ENCODE measurements at regions of chr1 and their contacts with region 1.

Region 1: GRCh38 chr1:111127923-111128643 is 11.8 kb downstream of the DRAM2 start:
- DNase-seq: peak; percentile 88
- ATAC-seq: peak; percentile 88
- H3K4me3 ChIP-seq: peak overlapping the region in 3 of 5 experiments; percentile 26 to 58 (median 31)
- H3K4me3 Mint-ChIP-seq: peak overlapping the region; percentile 36
- H3K27ac ChIP-seq: peak overlapping the region; percentile 95 to 98
- H3K27ac Mint-ChIP-seq: peak overlapping the region; percentile 72
- H3K4me1 ChIP-seq: peaks cover 79 to 93% of the 10 kb centered on the region in 2 donors
- H3K4me1 Mint-ChIP-seq: peaks cover 83% of the 10 kb centered on the region
- H3K27me3 ChIP-seq: no peaks in the 10 kb centered on the region
- H3K27me3 Mint-ChIP-seq: no peaks in the 10 kb centered on the region
- CTCF ChIP-seq: no peak

Region 2: GRCh38 chr1:109906160-109906838 is 1221.8 kb before region 1 on chr1:
- CTCF ChIA-PET with region 1: no interaction called
- POLR2A ChIA-PET with region 1: no interaction called
- intact Hi-C with region 1: loop called (anchors 5 kb)
- DNase-seq: peak; percentile 84
- ATAC-seq: peak; percentile 89
- H3K4me3 ChIP-seq: peak overlapping the region in 2 of 5 experiments; percentile 17 to 19
- H3K4me3 Mint-ChIP-seq: peak overlapping the region; percentile 74
- H3K27ac ChIP-seq: no peak overlapping the region
- H3K27ac Mint-ChIP-seq: peak overlapping the region; percentile 88
- H3K4me1 ChIP-seq: peaks cover 27 to 34% of the 10 kb centered on the region in 2 donors
- H3K4me1 Mint-ChIP-seq: peaks cover 45% of the 10 kb centered on the region
- H3K27me3 ChIP-seq: peaks cover 0 to 69% (median 42%) of the 10 kb centered on the region in 4 experiments
- H3K27me3 Mint-ChIP-seq: peaks cover 60% of the 10 kb centered on the region
- CTCF ChIP-seq: no peak

Region 3: GRCh38 chr1:110872745-110873720 is 255.1 kb before region 1 on chr1 and contains the start of gene CD53:
- CTCF ChIA-PET with region 1: no interaction called
- POLR2A ChIA-PET with region 1: no interaction called
- intact Hi-C with region 1: loop called (anchors 5 kb)
- DNase-seq: peak; percentile 92
- ATAC-seq: peak; percentile 66
- H3K4me3 ChIP-seq: peak within 1 kb of the TSS; percentile 73 to 100 (median 97)
- H3K4me3 Mint-ChIP-seq: peak within 1 kb of the TSS; percentile 99
- H3K27ac ChIP-seq: peak within 1 kb of the TSS; percentile 96 to 99
- H3K27ac Mint-ChIP-seq: peak within 1 kb of the TSS; percentile 99
- H3K4me1 ChIP-seq: peaks cover 60% of the 10 kb centered on the region in 2 donors
- H3K4me1 Mint-ChIP-seq: peaks cover 70% of the 10 kb centered on the region
- H3K27me3 ChIP-seq: no peaks in the 10 kb centered on the region
- H3K27me3 Mint-ChIP-seq: no peaks in the 10 kb centered on the region
- CTCF ChIP-seq: no peak
- total RNA-seq, gene CD53: 490 and 495 TPM in 2 replicates

Region 4: DNA sequence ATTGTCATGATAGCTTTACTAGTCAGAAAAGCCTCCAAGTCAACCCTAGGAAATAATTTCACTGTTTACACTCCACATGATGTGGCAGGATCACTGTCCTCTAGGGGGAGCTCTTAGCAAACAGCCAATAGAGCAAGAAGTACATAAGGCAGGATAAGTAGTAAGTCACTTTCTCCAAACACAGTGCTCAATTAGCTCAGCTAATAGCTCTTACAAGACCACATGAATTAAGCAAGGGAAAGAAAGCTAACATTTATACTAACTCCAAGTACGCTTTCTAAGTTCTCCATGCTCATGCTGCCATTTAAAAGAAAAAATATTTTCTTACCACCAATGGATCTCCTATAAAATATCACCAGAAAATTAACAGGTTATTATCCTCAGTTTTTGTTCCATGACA is 97.5 kb before region 1 on chr1:
- CTCF ChIA-PET with region 1: interaction called, 12 read pairs
- POLR2A ChIA-PET with region 1: no interaction called
- intact Hi-C with region 1: no loop called
- DNase-seq: peak; percentile 77
- ATAC-seq: peak; percentile 56
- H3K4me3 ChIP-seq: no peak overlapping the region
- H3K4me3 Mint-ChIP-seq: no peak overlapping the region
- H3K27ac ChIP-seq: no peak overlapping the region
- H3K27ac Mint-ChIP-seq: no peak overlapping the region
- H3K4me1 ChIP-seq: peaks cover 0 to 5% of the 10 kb centered on the region in 2 donors
- H3K4me1 Mint-ChIP-seq: peaks cover 15% of the 10 kb centered on the region
- H3K27me3 ChIP-seq: no peaks in the 10 kb centered on the region
- H3K27me3 Mint-ChIP-seq: peaks cover 3% of the 10 kb centered on the region
- CTCF ChIP-seq: peak; percentile 89

Region 5: DNA sequence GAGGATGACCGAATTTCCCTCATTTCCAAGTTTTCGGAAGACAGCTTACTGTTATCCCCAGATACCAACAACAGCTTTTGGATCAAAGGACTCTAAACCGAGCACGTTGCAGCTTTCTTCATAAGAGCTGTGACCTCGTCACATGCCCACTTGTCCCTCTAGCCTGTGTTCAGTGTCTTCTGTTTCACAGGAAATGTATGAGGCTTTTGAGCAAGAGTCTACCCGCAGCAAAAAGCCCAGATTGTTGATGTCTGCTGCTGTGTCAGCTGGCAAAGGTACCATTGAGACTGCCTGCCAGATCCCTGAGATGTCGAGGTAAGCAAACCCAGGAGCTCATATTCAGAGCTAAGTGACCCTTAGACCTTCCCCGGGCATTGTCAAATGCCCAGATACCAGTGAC is 123.5 kb after region 1 on chr1:
- CTCF ChIA-PET with region 1: no interaction called
- POLR2A ChIA-PET with region 1: no interaction called
- intact Hi-C with region 1: no loop called
- DNase-seq: no peak
- ATAC-seq: no peak
- H3K4me3 ChIP-seq: no peak overlapping the region
- H3K4me3 Mint-ChIP-seq: no peak overlapping the region
- H3K27ac ChIP-seq: no peak overlapping the region
- H3K27ac Mint-ChIP-seq: no peak overlapping the region
- H3K4me1 ChIP-seq: no peaks in the 10 kb centered on the region
- H3K4me1 Mint-ChIP-seq: no peaks in the 10 kb centered on the region
- H3K27me3 ChIP-seq: no peaks in the 10 kb centered on the region
- H3K27me3 Mint-ChIP-seq: peaks cover 7% of the 10 kb centered on the region
- CTCF ChIP-seq: no peak

Region 6: DNA sequence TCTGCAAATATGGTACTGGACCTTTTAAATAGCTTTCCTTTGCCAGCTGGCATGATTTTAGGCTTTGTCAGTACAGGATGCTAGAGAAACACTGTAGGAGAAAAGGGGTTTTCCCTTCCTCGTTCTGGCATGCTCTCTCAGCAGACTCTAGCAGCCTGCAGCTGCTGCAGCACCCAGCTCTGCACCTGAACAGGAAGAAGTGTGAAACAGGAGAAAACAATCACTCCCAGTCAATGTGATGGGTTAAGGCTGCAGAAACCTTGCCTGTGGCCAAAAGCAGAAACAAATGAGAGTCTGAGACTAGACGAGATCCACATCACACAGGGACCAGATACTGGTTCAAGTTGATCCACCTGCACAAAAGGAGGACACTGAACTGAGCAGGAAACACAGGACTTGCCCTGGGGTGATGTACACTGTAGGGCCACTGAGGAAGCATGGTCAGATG is 278.3 kb after region 1 on chr1:
- CTCF ChIA-PET with region 1: no interaction called
- POLR2A ChIA-PET with region 1: no interaction called
- intact Hi-C with region 1: loop called (anchors 5 kb)
- DNase-seq: peak; percentile 83
- ATAC-seq: peak; percentile 96
- H3K4me3 ChIP-seq: no peak overlapping the region
- H3K4me3 Mint-ChIP-seq: peak overlapping the region; percentile 59
- H3K27ac ChIP-seq: peak overlapping the region; percentile 32 to 37
- H3K27ac Mint-ChIP-seq: peak overlapping the region; percentile 79
- H3K4me1 ChIP-seq: peaks cover 30 to 35% of the 10 kb centered on the region in 2 donors
- H3K4me1 Mint-ChIP-seq: peaks cover 37% of the 10 kb centered on the region
- H3K27me3 ChIP-seq: no peaks in the 10 kb centered on the region
- H3K27me3 Mint-ChIP-seq: no peaks in the 10 kb centered on the region
- CTCF ChIP-seq: no peak

Measured in B cell (primary cell).